ENCODE measurements at regions of chr1 and their contacts with region 1.

Region 1: DNA sequence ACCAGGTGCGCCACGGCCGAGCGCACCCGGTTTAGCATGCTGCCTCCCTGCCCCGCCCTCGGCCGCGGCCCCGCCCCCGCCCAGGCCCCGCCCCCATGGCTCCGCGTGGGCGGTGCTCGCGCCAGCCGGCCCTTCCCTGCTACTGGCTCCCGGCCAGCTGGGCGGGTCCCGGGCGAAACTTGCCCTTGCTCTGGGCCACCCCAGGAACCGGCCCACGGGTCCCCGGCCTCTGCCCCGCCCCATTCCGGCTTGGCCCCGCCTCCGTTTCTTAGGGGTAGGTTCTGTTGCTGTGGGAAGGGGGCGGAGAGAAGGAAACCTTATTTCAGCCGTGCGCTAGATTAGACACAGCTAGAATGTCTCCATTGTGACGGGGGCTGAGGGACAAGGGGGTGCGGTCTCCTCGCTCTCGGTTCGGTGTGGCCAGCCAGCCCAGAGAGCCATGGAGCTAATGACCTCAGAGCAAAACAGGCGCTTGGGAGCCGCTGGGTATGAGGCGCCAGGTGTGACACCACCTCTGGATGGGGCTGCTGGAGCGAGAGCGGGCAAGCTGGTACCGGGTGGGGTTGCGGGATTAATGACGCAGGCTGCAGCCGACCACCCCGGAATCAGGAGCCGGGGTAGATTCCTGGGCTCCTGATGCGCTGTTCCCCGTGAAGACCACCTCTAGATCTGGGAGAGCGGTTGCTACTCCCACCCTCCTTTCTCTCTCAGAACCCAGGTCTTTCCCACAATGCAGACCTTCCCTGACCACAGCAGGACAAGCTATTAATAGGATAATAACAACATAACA is at the start of gene PPM1J:
- DNase-seq: peak; percentile 79 to 85
- ATAC-seq: peak; percentile 68 to 84
- H3K4me3 ChIP-seq: peak within 1 kb of the TSS; percentile 72
- H3K27ac ChIP-seq: peak within 1 kb of the TSS; percentile 55 to 84; a peak in 5 of 6 replicates
- H3K4me1 ChIP-seq: peaks cover 4% of the 10 kb centered on the region; the same call in 2 of the 3 replicates
- CTCF ChIP-seq: no peak
- EP300 ChIP-seq: no peak
- POLR2A ChIP-seq: no peak
- RAD21 ChIP-seq: no peak
- polyA plus RNA-seq, gene PPM1J: 0.62 and 0.66 TPM in 2 replicates

Region 2: GRCh38 chr1:112674439-112674985 is 40.9 kb before region 1 on chr1 and contains the start of gene MOV10:
- CTCF ChIA-PET with region 1: interaction called, 13 read pairs
- POLR2A ChIA-PET with region 1: no interaction called
- DNase-seq: peak; percentile 35 to 69
- ATAC-seq: peak; percentile 74 to 85
- H3K4me3 ChIP-seq: peak within 1 kb of the TSS; percentile 92
- H3K27ac ChIP-seq: peak within 1 kb of the TSS; percentile 94 to 97
- H3K4me1 ChIP-seq: peaks cover 11% of the 10 kb centered on the region; the same call in 2 of the 3 replicates
- CTCF ChIP-seq: no peak
- EP300 ChIP-seq: no peak
- POLR2A ChIP-seq: 0 out of 2 replicates have a peak, but pooled peaks have one; percentile 23
- RAD21 ChIP-seq: no peak
- polyA plus RNA-seq, gene MOV10: 27.3 and 28.3 TPM in 2 replicates

Region 3: DNA sequence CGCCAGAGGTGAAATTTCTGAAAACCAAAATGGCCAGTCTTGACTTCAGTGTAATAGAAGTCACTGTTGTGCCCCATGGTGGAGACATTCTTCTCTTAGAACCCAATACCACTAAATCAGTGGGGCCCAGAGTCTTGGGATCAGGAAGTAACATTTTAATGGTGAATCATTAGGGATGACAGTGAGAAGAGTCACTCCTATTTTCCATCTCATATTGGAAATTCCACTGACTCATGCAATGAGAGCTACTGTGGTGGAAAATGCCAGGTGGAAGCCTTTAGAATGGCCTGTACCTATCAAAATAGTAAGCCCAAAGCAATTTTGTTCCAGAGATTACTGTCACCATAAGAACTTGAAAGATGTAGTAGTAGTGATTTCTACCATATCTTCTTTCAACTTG is 20.3 kb after region 1 on chr1:
- CTCF ChIA-PET with region 1: interaction called, 23 read pairs
- POLR2A ChIA-PET with region 1: no interaction called
- DNase-seq: peak; percentile 23 to 28
- ATAC-seq: peak; percentile 62 to 67; a peak in 4 of 6 replicates
- H3K4me3 ChIP-seq: no peak overlapping the region
- H3K27ac ChIP-seq: no peak overlapping the region
- H3K4me1 ChIP-seq: no peaks in the 10 kb centered on the region
- CTCF ChIP-seq: no peak
- EP300 ChIP-seq: no peak
- POLR2A ChIP-seq: no peak
- RAD21 ChIP-seq: no peak

Region 4: GRCh38 chr1:112818990-112819689 is 103.7 kb after region 1 on chr1:
- CTCF ChIA-PET with region 1: interaction called, 11 read pairs
- POLR2A ChIA-PET with region 1: no interaction called
- DNase-seq: no peak
- ATAC-seq: no peak
- H3K4me3 ChIP-seq: no peak overlapping the region
- H3K27ac ChIP-seq: no peak overlapping the region
- H3K4me1 ChIP-seq: no peaks in the 10 kb centered on the region
- CTCF ChIP-seq: no peak
- EP300 ChIP-seq: no peak
- POLR2A ChIP-seq: no peak
- RAD21 ChIP-seq: no peak

Region 5: DNA sequence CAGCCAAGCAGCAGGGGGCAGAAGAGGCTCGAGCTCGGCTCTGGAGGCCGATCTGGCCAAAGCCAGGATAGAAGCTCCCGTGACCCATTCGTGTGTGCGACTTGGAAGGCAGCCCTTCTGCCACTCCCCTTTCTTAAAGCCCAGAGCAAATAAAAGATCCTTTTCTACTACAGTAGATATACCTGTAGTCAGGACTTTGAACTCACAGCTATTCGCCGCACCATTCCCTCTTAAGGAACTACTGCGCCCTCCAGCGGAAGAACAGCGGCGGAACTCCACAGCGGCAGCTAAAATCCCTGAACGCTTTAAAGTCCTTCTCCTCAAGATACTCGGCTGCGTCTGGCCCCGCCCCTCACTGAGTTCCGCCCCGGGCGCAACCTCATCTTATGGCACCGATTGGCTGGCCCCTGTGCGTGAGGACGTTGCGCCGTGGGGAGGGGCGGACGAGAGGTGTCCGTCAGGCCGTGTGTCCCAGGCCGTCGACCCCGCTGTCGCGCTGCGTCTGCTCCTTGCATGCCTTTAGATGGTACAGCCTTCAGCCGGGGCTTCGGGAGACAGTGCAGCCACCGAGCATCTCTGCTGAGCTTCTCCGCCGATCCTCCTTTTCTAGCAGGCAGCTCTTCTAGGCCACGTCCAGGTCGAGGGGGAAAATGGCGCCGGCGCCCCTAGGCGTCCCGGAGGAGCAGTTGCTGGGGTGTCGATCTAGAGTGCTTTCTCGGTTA is 357.5 kb after region 1 on chr1 and contains the start of gene LRIG2:
- CTCF ChIA-PET with region 1: interaction called, 27 read pairs
- POLR2A ChIA-PET with region 1: interaction called, 12 read pairs
- DNase-seq: peak; percentile 80 to 97
- ATAC-seq: peak; percentile 99
- H3K4me3 ChIP-seq: peak within 1 kb of the TSS; percentile 94
- H3K27ac ChIP-seq: peak within 1 kb of the TSS; percentile 97
- H3K4me1 ChIP-seq: peaks cover 8% of the 10 kb centered on the region; the same call in 2 of the 3 replicates
- CTCF ChIP-seq: peak; percentile 94
- EP300 ChIP-seq: no peak
- POLR2A ChIP-seq: peak; percentile 95
- RAD21 ChIP-seq: peak; percentile 45 to 69
- polyA plus RNA-seq, gene LRIG2: 7.4 and 9.3 TPM in 2 replicates